Cardiac septum (tissue), 1 donor: ENCODE measurements at regions of chr2 and their contacts with region 1.

Region 1: GRCh38 chr2:33372940-33373553 is 103.4 kb upstream of the RASGRP3 start:
- DNase-seq: no peak

Region 2: DNA sequence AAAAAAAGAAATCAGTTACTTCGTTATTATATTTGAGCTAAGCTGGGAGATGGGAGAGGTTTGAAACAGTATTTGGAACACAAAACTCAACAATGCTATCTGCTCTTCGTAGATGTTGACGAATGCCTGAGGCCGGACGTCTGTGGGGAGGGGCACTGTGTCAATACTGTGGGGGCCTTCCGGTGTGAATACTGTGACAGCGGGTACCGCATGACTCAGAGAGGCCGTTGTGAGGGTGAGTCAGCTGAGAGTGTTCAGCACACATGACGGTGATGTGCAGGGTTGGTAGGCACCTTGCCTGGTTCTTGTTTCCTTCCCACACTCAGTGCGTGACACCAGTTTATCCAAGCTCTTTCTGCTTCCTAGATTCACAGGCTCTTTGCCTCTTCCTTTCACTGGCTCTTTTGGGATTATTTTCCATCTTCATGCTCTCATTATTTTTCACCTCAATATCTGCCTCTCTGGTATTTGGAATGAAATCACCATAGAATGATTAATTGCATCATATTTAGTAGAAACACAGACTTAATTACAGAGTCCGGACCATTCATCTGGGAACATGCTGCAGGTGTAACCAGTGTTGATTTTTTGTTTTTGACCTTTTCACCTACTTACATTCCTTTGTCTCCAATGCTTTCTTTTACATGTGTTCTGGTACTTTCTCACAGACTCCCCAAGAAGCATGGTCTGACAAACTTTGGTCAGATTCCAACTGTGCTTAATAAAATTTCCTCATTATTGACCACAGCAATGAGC is 97.2 kb before region 1 on chr2:
- intact Hi-C with region 1: loop called (anchors 5 kb)
- DNase-seq: no peak

Region 3: GRCh38 chr2:33518926-33519325 is 145.9 kb after region 1 on chr2:
- intact Hi-C with region 1: no loop called
- DNase-seq: no peak